ENCODE measurements at regions of chr2 and their contacts with region 1.

Region 1: DNA sequence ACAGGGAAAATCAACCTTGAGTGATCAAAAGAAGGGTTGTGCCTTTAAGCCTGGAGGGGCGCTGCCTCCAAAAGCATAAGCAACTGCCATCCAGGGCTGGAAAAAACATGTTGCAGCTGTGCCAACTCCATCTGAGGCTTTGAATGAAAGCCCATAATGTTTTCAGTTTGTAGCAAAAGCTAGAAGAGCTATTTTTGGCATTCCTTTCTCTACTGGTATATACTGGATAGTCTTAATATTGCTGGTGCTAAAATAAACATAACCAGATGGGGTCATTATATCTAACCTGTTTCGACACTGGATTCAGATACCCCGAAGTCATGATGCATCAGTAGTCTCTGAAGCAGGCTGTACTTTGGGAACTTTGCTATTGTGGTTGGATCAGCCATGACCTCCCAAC is 25.1 kb downstream of the ANXA4 start:
- DNase-seq: no peak
- ATAC-seq: no peak
- H3K4me3 Mint-ChIP-seq: no peak overlapping the region
- H3K27ac Mint-ChIP-seq: no peak overlapping the region
- H3K4me1 Mint-ChIP-seq: peaks cover 73% of the 10 kb centered on the region
- H3K27me3 Mint-ChIP-seq: no peaks in the 10 kb centered on the region
- CTCF ChIP-seq: no peak

Region 2: DNA sequence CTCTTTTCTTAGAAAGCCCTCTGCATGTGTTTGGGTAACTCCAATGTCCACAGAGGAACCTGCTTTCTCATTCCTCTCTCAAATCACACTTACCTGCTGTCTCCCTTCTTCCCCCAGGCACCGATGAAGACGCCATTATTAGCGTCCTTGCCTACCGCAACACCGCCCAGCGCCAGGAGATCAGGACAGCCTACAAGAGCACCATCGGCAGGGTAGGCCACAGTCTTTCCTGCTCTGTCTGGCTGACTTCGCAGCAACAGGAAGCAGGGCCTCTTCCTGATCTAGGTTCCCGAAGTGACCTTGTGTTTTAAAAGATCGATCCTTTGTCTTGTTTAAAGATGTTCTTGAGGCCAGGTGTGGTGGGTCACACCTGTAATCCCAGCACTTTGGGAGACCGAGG is 37.4 kb after region 1 on chr2:
- CTCF ChIA-PET with region 1: no interaction called
- POLR2A ChIA-PET with region 1: interaction called, 4 read pairs
- intact Hi-C with region 1: loop called (anchors 5 kb)
- DNase-seq: no peak
- ATAC-seq: no peak
- H3K4me3 Mint-ChIP-seq: peak overlapping the region; percentile 41
- H3K27ac Mint-ChIP-seq: peak overlapping the region; percentile 37
- H3K4me1 Mint-ChIP-seq: peaks cover 46% of the 10 kb centered on the region
- H3K27me3 Mint-ChIP-seq: no peaks in the 10 kb centered on the region
- CTCF ChIP-seq: no peak

Measured in activated B cell treated with CpG ODN at 0.5 μM for 24 hours (primary cell).